OCI-LY7 (cell line): ENCODE measurements at regions of chr5 and their contacts with region 1.

Region 1: GRCh38 chr5:64659289-64659688 is 31.0 kb upstream of the SHISAL2B start:
- DNase-seq: no peak
- H3K4me3 ChIP-seq: no peak overlapping the region
- H3K27ac ChIP-seq: no peak overlapping the region
- H3K4me1 ChIP-seq: no peaks in the 10 kb centered on the region
- CTCF ChIP-seq: no peak

Region 2: DNA sequence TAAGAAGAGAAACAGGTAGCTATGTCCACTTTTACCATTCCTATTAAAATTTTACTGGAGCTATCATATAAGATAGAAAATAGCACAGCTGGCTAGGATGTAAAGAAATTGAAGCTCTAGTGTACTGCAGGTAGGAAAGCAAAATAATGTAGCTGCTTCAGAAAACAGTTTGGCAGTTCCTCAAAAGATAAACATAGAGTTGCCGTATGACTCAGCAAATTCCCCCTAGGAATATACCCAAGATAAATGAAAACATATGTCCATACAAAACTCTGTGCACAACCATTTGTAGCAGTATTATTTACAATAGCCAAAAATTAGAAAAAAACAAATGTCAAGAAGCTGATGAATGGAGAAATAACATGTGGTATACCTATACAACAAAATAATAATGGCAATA is 33.6 kb before region 1 on chr5:
- CTCF ChIA-PET with region 1: no interaction called
- POLR2A ChIA-PET with region 1: interaction called, 13 read pairs
- intact Hi-C with region 1: no loop called
- DNase-seq: no peak
- H3K4me3 ChIP-seq: no peak overlapping the region
- H3K27ac ChIP-seq: no peak overlapping the region
- H3K4me1 ChIP-seq: no peaks in the 10 kb centered on the region
- CTCF ChIP-seq: no peak

Region 3: DNA sequence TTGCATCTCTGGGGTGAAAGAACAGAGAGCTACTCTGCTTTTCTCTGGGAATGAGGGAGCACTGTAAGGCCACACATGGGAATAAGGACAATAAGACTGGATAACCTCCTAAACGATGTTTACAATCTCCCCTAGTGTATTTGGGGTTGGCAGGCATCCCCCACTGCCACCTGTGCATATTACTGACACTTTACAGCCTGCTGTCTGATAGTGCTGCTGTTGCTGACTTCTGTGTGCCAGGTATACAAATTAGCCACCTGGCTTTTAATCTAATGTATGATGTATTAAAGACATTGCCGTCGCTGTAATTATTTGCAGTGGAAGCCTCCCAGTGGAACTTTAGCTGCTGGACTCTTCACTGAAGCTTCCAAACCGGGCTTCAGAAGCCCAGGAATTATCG is 26.6 kb after region 1 on chr5:
- CTCF ChIA-PET with region 1: no interaction called
- POLR2A ChIA-PET with region 1: no interaction called
- intact Hi-C with region 1: no loop called
- DNase-seq: no peak
- H3K4me3 ChIP-seq: no peak overlapping the region
- H3K27ac ChIP-seq: no peak overlapping the region
- H3K4me1 ChIP-seq: no peaks in the 10 kb centered on the region
- CTCF ChIP-seq: no peak